HEK293T (cell line): ENCODE measurements at regions of chr13 and their contacts with region 1.

Region 1: GRCh38 chr13:86870444-86870843 is 800.7 kb upstream of the SLITRK5 start:
- DNase-seq: no peak

Region 2: DNA sequence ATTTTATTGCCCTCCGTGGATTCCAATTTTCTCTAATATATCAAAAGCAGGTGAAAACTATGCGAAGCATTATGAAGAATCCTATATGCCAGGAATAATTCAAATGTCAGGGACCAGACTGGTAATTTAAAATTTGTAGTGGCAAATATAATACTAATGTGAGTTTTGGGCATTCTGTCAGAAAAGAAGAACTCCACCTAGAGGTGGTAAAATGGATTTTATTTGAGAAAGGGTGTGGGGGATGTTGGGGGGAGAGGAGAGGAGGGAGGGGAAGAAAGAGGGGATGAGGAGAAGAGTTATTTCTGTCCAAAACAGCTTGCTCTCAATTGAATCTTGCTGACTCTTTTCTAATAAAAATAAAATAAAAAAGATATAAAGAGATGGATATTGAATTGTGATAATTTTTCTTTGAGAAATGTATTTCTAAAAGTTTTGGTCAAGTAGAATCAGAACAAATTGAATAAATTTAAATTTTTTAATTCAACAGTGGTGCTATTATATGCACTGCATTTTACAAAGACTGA is 128.6 kb before region 1 on chr13:
- CTCF ChIA-PET with region 1: no interaction called
- POLR2A ChIA-PET with region 1: no interaction called
- DNase-seq: no peak

Region 3: GRCh38 chr13:86906127-86906874 is 35.9 kb after region 1 on chr13:
- CTCF ChIA-PET with region 1: no interaction called
- POLR2A ChIA-PET with region 1: no interaction called
- DNase-seq: no peak

Region 4: GRCh38 chr13:87274209-87274819 is 403.9 kb after region 1 on chr13:
- CTCF ChIA-PET with region 1: interaction called, 41 read pairs
- POLR2A ChIA-PET with region 1: no interaction called
- DNase-seq: peak; percentile 58